Caco-2 (cell line): ENCODE measurements at regions of chr17 and their contacts with region 1.

Region 1: GRCh38 chr17:74759243-74759801 is 10.9 kb downstream of the NHERF1 start:
- DNase-seq: peak; percentile 71 to 73
- H3K4me3 ChIP-seq: no peak overlapping the region
- H3K4me3 Mint-ChIP-seq: peak overlapping the region; percentile 69
- H3K27ac Mint-ChIP-seq: peak overlapping the region; percentile 94
- H3K4me1 ChIP-seq: peaks cover 73% of the 10 kb centered on the region
- H3K4me1 Mint-ChIP-seq: peaks cover 41% of the 10 kb centered on the region
- H3K27me3 ChIP-seq: no peaks in the 10 kb centered on the region
- H3K27me3 Mint-ChIP-seq: no peaks in the 10 kb centered on the region
- CTCF ChIP-seq: peak in 1 of 2 experiments; percentile 30

Region 2: DNA sequence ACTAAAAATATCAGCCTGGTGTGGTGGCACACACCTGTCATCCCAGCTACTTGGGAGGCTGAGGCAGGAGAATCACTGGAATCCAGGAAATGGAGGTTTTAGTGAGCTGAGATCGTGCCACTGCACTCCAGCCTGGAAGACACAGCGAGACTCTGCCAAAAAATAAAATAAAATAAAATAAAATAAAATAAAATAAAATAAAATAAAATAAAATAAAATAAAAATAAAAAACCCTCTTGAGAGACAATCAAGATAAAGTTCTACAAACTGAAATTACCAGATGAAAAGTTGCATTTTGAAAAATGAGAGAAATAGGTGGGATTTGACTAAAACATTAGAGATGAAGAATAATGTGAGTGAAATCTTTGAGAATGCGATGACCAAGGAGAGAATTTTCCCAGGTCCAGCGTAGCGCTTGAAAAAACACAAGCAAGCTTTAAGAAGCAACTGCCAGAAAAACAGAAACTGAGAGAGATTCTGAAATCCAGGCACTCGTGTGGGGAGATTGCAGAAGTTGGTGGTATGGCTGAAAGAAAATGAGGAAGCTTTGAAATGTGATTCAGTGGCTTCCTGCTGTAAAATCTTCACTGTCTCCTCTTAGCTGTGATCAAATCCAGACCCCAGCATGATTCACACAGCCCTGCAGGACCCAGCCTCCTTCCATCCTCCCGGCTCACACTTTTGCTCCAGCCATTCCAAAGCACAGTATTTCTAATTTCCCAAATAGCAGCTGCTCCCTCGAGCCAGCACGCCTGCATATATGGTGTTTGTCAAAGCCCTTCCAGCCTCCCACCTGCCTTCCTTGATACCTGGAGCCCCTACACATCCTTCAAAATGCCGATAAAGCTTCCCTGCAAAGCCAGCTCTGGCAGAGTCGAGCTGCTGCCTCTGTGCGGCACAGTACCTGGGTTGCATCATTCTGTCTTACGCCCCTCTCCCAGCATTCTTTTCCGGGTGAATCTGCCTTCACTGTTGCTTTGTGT is 127.6 kb before region 1 on chr17:
- CTCF ChIA-PET with region 1: no interaction called
- POLR2A ChIA-PET with region 1: no interaction called
- intact Hi-C with region 1: no loop called
- DNase-seq: no peak
- H3K4me3 ChIP-seq: no peak overlapping the region
- H3K4me3 Mint-ChIP-seq: peak overlapping the region; percentile 39
- H3K27ac Mint-ChIP-seq: no peak overlapping the region
- H3K4me1 ChIP-seq: no peaks in the 10 kb centered on the region
- H3K4me1 Mint-ChIP-seq: no peaks in the 10 kb centered on the region
- H3K27me3 ChIP-seq: no peaks in the 10 kb centered on the region
- H3K27me3 Mint-ChIP-seq: peaks cover 13% of the 10 kb centered on the region
- CTCF ChIP-seq: no peak

Region 3: GRCh38 chr17:74770498-74771318 is 11.4 kb after region 1 on chr17:
- CTCF ChIA-PET with region 1: interaction called, 25 read pairs
- POLR2A ChIA-PET with region 1: interaction called, 9 read pairs
- intact Hi-C with region 1: no loop called
- DNase-seq: peak; percentile 84 to 89
- H3K4me3 ChIP-seq: no peak overlapping the region
- H3K4me3 Mint-ChIP-seq: peak overlapping the region; percentile 24
- H3K27ac Mint-ChIP-seq: peak overlapping the region; percentile 83
- H3K4me1 ChIP-seq: peaks cover 51% of the 10 kb centered on the region
- H3K4me1 Mint-ChIP-seq: peaks cover 51% of the 10 kb centered on the region
- H3K27me3 ChIP-seq: no peaks in the 10 kb centered on the region
- H3K27me3 Mint-ChIP-seq: no peaks in the 10 kb centered on the region
- CTCF ChIP-seq: peak; percentile 86 to 97

Region 4: GRCh38 chr17:74776044-74776977 is 17.0 kb after region 1 on chr17 and contains the start of gene NAT9:
- CTCF ChIA-PET with region 1: interaction called, 25 read pairs
- POLR2A ChIA-PET with region 1: interaction called, 9 read pairs
- intact Hi-C with region 1: loop called (anchors 2 kb)
- DNase-seq: peak; percentile 97 to 100
- H3K4me3 ChIP-seq: peak within 1 kb of the TSS; percentile 80
- H3K4me3 Mint-ChIP-seq: peak within 1 kb of the TSS; percentile 97
- H3K27ac Mint-ChIP-seq: peak within 1 kb of the TSS; percentile 95
- H3K4me1 ChIP-seq: peaks cover 27% of the 10 kb centered on the region
- H3K4me1 Mint-ChIP-seq: peaks cover 22% of the 10 kb centered on the region
- H3K27me3 ChIP-seq: no peaks in the 10 kb centered on the region
- H3K27me3 Mint-ChIP-seq: no peaks in the 10 kb centered on the region
- CTCF ChIP-seq: no peak
- total RNA-seq, gene NAT9: 84.5 and 89.5 TPM in 2 replicates